Esophagus squamous epithelium (tissue), 5 donors: ENCODE measurements at regions of chr1 and their contacts with region 1.

Region 1: DNA sequence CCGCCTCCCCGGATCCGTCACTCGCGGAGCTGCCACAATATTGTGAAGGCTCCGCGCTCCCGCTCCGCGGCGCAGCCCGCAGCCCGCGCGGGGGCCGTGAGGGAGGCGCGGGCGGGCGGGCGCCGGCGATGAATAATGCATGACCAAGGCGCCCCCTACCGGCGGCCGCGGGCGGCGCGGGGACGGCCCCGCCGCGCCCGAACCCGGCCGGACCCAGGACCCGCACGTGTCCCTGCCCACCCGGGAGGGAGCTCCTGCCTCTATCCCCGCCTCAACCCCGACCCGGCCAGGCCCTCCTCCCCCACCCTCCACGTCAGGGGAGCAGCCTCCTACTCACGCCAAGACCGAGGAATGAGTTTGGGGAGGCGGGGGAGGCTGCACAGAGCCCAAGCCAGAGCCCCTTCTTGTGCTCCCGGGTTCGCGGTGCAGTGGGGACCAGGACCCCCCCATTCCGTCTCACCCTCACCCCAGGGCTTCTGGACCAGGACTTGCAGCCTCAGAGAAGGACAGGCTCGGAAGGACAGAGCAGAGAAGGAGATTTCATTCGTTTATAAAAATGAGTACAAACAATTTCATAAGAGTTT is 70.8 kb upstream of the CASZ1 start:
- DNase-seq: no peak
- H3K4me3 ChIP-seq: peak overlapping the region; percentile 36 to 71 (median 48)
- H3K27ac ChIP-seq: peak overlapping the region in 1 of 4 donors; percentile 44
- H3K4me1 ChIP-seq: peaks cover 8 to 20% (median 9%) of the 10 kb centered on the region in 3 donors
- H3K27me3 ChIP-seq: peaks cover 0 to 70% (median 0%) of the 10 kb centered on the region in 4 donors
- CTCF ChIP-seq: peak; percentile 57 to 95 (median 86)
- POLR2A ChIP-seq: no peak

Region 2: GRCh38 chr1:10507111-10507879 is 359.9 kb before region 1 on chr1:
- intact Hi-C with region 1: loop called (anchors 5 kb)
- DNase-seq: no peak
- H3K4me3 ChIP-seq: no peak overlapping the region
- H3K27ac ChIP-seq: no peak overlapping the region
- H3K4me1 ChIP-seq: peaks cover 23 to 59% (median 23%) of the 10 kb centered on the region in 3 donors
- H3K27me3 ChIP-seq: no peaks in the 10 kb centered on the region
- CTCF ChIP-seq: peak; percentile 71 to 82 (median 76)
- POLR2A ChIP-seq: no peak

Region 3: GRCh38 chr1:10679496-10680220 is 187.6 kb before region 1 on chr1:
- intact Hi-C with region 1: loop called (anchors 10 kb)
- DNase-seq: no peak
- H3K4me3 ChIP-seq: peak overlapping the region in 1 of 4 donors; percentile 12
- H3K27ac ChIP-seq: peak overlapping the region in 3 of 4 donors; percentile 22 to 82 (median 79)
- H3K4me1 ChIP-seq: peaks cover 19 to 100% (median 22%) of the 10 kb centered on the region in 3 donors
- H3K27me3 ChIP-seq: no peaks in the 10 kb centered on the region
- CTCF ChIP-seq: no peak
- POLR2A ChIP-seq: no peak